Activated CD4-positive, alpha-beta T cell treated with anti-CD3 and anti-CD28 coated beads, Interleukin-2, amount 10 ng/mL, durations not matched to agents 24 days and 14 days (primary cell): ENCODE measurements at regions of chr6 and their contacts with region 1.

Region 1: GRCh38 chr6:111855753-111856152 is 17.5 kb downstream of the FYN start:
- DNase-seq: no peak
- H3K4me3 Mint-ChIP-seq: no peak overlapping the region
- H3K27ac Mint-ChIP-seq: no peak overlapping the region
- H3K4me1 Mint-ChIP-seq: peaks cover 78% of the 10 kb centered on the region
- H3K27me3 Mint-ChIP-seq: no peaks in the 10 kb centered on the region

Region 2: GRCh38 chr6:111880181-111880888 is 24.6 kb after region 1 on chr6:
- intact Hi-C with region 1: loop called (anchors 1 kb)
- DNase-seq: no peak
- H3K4me3 Mint-ChIP-seq: no peak overlapping the region
- H3K27ac Mint-ChIP-seq: no peak overlapping the region
- H3K4me1 Mint-ChIP-seq: no peaks in the 10 kb centered on the region
- H3K27me3 Mint-ChIP-seq: peaks cover 2% of the 10 kb centered on the region

Region 3: DNA sequence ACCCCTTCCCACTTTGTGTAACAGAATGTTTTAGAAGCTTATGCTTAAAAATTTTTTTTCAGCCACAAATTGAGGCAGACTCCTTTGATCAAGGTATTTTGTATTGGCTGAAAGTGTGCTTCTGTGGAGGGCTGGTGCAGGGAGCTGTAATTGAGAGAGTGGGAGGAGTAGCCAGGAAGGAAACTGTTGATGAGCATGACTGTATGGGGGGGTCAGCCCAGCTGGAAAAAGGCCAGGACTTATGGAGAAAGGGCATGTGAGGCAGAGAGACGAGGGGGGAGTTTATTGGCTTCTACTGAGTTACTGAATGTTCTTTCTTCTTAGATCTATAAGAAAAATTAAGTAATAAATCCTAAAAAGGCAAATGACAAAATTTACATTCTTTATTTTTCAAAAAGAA is 504.7 kb after region 1 on chr6:
- intact Hi-C with region 1: no loop called
- DNase-seq: no peak
- H3K4me3 Mint-ChIP-seq: no peak overlapping the region
- H3K27ac Mint-ChIP-seq: no peak overlapping the region
- H3K4me1 Mint-ChIP-seq: no peaks in the 10 kb centered on the region
- H3K27me3 Mint-ChIP-seq: no peaks in the 10 kb centered on the region